ENCODE measurements at regions of chr22 and their contacts with region 1.

Region 1: GRCh38 chr22:43574769-43575168 is 163.0 kb downstream of the MPPED1 start:
- DNase-seq: no peak
- ATAC-seq: no peak
- H3K4me3 ChIP-seq: no peak overlapping the region
- H3K27ac ChIP-seq: no peak overlapping the region
- H3K4me1 ChIP-seq: no peaks in the 10 kb centered on the region
- H3K27me3 ChIP-seq: peaks cover 0 to 12% (median 0%) of the 10 kb centered on the region in 3 donors
- CTCF ChIP-seq: no peak

Region 2: DNA sequence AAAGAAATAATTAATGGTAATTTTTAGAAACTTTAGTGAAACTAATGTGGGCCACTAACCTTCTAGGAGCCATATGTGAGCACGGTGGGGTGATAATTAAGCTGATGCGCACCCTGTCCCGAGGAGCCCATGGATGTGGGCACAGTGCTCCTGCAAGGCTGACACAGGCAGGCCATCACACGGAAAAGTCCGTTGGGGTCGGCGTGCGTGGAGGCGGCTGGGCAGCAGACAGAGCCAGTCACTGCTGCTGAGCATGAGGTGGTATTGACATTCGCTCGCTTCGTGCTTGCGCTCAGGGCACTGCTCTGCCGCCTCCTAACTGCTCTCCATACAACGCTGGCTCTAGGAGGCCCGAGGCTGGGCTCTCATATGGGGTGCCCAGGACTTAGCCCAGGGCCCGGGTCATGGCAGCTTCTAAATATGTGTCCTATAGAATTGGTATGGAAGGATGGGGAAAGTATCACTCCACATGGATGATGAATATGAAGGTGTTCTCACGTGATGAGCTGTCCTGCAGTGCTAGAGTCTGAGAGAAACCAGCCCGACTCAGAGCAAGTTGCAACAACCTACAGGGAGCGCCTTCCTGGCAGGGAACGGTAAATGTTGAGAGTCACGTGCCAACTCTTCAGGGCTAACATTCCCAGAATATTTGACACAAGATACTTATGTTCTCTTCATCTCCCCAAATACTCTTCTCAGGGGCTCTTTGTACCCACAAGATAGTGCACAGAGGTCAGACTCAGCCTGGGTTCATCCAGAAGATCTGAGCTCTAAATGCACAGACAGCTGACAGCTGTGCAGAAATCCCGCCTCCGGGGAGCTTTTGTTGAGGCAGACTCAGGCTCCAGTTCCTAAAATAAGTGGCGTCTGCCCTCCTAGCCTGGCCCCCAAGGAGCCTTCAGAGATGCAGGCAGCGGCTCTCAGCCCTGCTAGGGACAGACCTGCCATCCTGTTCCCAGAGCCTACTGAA is 667.1 kb before region 1 on chr22:
- intact Hi-C with region 1: no loop called
- DNase-seq: no peak
- ATAC-seq: peak in 3 of 4 donors; percentile 1 to 22 (median 9)
- H3K4me3 ChIP-seq: no peak overlapping the region
- H3K27ac ChIP-seq: peak overlapping the region; percentile 66
- H3K4me1 ChIP-seq: peaks cover 69% of the 10 kb centered on the region
- H3K27me3 ChIP-seq: no peaks in the 10 kb centered on the region
- CTCF ChIP-seq: no peak

Region 3: DNA sequence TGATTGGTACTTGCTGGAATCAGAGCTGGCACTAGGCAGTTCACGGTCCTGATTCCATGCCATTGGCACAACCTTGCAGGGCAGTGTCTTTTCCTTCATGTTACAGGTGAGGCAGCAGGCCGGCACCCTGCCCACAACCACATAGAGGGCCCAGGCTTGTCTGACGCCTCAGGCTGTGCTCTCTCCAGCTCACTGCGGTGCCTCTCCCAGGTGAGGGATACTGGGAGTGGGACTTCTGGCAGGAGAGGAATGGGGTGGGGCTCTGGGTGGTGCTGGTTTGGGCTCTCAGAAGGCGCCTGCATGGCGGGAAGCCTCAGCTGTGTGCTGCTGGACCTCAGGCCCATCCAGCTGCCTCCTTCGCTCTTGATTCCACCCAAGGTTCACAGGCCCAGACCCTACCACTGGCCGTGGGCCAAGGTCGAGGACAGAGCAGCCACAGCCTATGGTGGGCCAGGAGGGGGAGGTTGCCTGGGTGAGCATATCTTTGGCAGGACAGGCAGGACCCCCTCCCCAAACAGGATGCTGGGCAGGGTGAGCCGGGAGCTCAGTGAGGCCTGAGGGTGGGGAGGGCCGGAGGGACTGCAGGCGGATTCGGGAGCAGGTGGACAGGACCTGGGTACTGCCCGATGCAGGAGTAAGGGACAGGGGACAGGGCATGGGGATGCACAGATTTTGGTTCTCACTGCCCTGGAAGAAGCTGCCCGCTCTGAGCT is 169.9 kb before region 1 on chr22:
- intact Hi-C with region 1: no loop called
- DNase-seq: peak in 1 of 2 donors; percentile 32
- ATAC-seq: no peak
- H3K4me3 ChIP-seq: no peak overlapping the region
- H3K27ac ChIP-seq: no peak overlapping the region
- H3K4me1 ChIP-seq: no peaks in the 10 kb centered on the region
- H3K27me3 ChIP-seq: peaks cover 0 to 17% (median 16%) of the 10 kb centered on the region in 3 donors
- CTCF ChIP-seq: no peak

Region 4: GRCh38 chr22:43537014-43537585 is 37.7 kb before region 1 on chr22:
- intact Hi-C with region 1: loop called in 1 of 2 experiments (anchors 1 kb)
- DNase-seq: no peak
- ATAC-seq: no peak
- H3K4me3 ChIP-seq: no peak overlapping the region
- H3K27ac ChIP-seq: no peak overlapping the region
- H3K4me1 ChIP-seq: no peaks in the 10 kb centered on the region
- H3K27me3 ChIP-seq: no peaks in the 10 kb centered on the region
- CTCF ChIP-seq: no peak

Measured in psoas muscle (tissue), 8 donors.